T-cell (primary cell): ENCODE measurements at regions of chrX and their contacts with region 1.

Region 1: GRCh38 chrX:12974796-12975669 is at the start of gene TMSB4X:
- DNase-seq: peak; percentile 60 to 85 (median 78)
- ATAC-seq: peak; percentile 52 to 59 (median 55)
- H3K4me3 ChIP-seq: peak within 1 kb of the TSS; percentile 90 to 98
- H3K4me3 Mint-ChIP-seq: peak within 1 kb of the TSS; percentile 79 to 97 (median 94)
- H3K27ac ChIP-seq: peak within 1 kb of the TSS; percentile 94
- H3K27ac Mint-ChIP-seq: peak within 1 kb of the TSS; percentile 93 to 98
- H3K4me1 ChIP-seq: peaks cover 26% of the 10 kb centered on the region in 2 experiments
- H3K4me1 Mint-ChIP-seq: peaks cover 34 to 76% (median 43%) of the 10 kb centered on the region in 3 donors
- H3K27me3 ChIP-seq: no peaks in the 10 kb centered on the region
- H3K27me3 Mint-ChIP-seq: peaks cover 0 to 4% of the 10 kb centered on the region in 2 donors
- total RNA-seq, gene TMSB4X: 5,030 to 6,201 (median 5,880) TPM

Region 2: DNA sequence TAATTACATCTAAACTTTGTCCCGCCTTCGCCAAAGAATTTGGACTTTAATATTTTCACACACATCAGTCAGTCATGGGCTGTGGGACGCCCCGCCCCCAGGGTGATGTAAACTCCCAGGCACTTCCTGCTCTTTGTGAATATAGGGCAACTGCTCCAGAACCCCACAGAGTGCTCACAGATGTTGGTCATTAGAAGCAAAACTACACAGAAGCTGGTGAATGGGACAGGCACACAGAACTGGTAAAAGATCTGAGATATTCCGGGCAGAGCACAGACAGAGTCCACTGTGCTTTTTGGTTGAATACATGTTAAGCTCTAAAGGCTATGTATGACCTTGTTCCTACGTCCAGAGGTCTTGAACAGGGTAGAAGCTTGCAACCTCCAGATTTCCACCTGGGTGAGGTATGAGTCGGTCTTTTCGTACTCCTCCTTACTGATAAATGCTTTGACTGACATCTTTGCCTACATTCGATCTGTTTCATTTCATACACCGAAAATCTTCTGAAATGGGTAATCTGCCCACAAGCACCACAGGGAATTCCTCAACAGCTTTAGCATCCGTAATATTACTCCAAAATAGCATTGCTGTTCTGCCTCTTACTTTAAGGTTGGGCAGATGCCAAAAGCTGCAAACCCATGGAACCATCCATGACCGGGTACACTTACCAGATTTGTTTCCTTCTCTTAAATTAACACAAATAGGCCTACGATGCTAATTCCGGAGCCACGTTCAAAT is 1537.2 kb before region 1 on chrX:
- CTCF ChIA-PET with region 1: no interaction called
- POLR2A ChIA-PET with region 1: no interaction called
- DNase-seq: no peak
- ATAC-seq: no peak
- H3K4me3 ChIP-seq: no peak overlapping the region
- H3K4me3 Mint-ChIP-seq: no peak overlapping the region
- H3K27ac ChIP-seq: no peak overlapping the region
- H3K27ac Mint-ChIP-seq: no peak overlapping the region
- H3K4me1 ChIP-seq: no peaks in the 10 kb centered on the region
- H3K4me1 Mint-ChIP-seq: no peaks in the 10 kb centered on the region
- H3K27me3 ChIP-seq: no peaks in the 10 kb centered on the region
- H3K27me3 Mint-ChIP-seq: peaks cover 2 to 36% of the 10 kb centered on the region in 2 donors

Region 3: GRCh38 chrX:12955882-12956703 is 18.9 kb before region 1 on chrX:
- CTCF ChIA-PET with region 1: interaction called, 9 to 42 read pairs
- POLR2A ChIA-PET with region 1: interaction called, 10 to 13 read pairs
- DNase-seq: peak in 14 of 35 experiments; percentile 13 to 73 (median 51)
- ATAC-seq: peak; percentile 20 to 36 (median 30)
- H3K4me3 ChIP-seq: peak overlapping the region; percentile 43 to 56
- H3K4me3 Mint-ChIP-seq: peak overlapping the region; percentile 78 to 82 (median 78)
- H3K27ac ChIP-seq: peak overlapping the region; percentile 94
- H3K27ac Mint-ChIP-seq: peak overlapping the region; percentile 96 to 99
- H3K4me1 ChIP-seq: peaks cover 66 to 83% of the 10 kb centered on the region in 2 experiments
- H3K4me1 Mint-ChIP-seq: peaks cover 80 to 90% (median 84%) of the 10 kb centered on the region in 3 donors
- H3K27me3 ChIP-seq: no peaks in the 10 kb centered on the region
- H3K27me3 Mint-ChIP-seq: no peaks in the 10 kb centered on the region

Region 4: DNA sequence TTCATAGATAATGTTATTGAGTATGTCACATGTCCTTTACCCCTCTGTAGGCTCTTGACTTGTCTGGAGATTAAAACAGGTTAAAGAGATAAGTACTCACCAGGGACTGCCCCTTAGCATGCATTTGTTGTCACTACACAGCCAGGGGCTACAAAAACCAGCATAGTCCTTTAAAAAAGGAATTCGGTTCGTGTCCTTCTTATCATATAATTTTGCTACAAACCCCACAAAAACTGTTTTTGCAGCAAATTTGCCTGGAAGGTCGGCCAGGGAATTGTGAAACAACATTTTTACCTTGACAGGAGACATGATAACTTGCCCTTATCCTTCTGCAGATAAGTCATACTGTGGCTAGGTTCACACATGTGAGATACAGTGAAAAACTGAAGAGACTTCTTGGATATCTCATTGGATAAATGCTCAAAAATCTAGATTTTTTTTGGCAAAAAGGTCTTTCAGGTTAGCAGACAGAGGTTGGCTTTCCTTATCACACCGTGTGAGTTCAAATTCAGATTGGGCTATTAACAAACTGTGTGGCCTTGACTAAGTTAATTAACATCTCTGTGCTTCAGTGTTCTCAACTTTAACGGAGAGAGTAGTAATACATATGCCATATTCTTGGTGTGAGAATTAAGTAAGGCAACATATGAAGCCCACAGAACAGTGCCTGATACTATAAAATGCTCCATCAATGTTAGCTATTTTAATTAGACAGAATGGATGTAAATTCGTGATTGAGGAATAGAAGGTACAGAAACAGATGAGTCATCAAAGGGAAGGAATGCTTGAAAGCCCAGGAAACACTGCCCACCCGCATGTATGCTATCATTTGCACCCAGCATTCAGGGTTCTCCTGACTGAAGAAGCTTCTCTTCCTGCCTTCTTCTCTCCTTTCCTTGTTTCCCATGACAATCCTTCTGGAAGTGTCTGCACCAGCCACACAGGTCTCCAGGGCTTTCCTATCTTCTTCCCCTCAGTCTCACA is 39.4 kb after region 1 on chrX:
- CTCF ChIA-PET with region 1: no interaction called
- POLR2A ChIA-PET with region 1: interaction called in 1 of 2 experiments, 11 read pairs
- DNase-seq: no peak
- ATAC-seq: peak in 1 of 4 experiments; percentile 32
- H3K4me3 ChIP-seq: no peak overlapping the region
- H3K4me3 Mint-ChIP-seq: peak overlapping the region in 2 of 3 donors; percentile 2 to 66
- H3K27ac ChIP-seq: peak overlapping the region; percentile 95
- H3K27ac Mint-ChIP-seq: peak overlapping the region; percentile 85 to 96
- H3K4me1 ChIP-seq: peaks cover 20 to 33% of the 10 kb centered on the region in 2 experiments
- H3K4me1 Mint-ChIP-seq: peaks cover 58 to 68% (median 58%) of the 10 kb centered on the region in 3 donors
- H3K27me3 ChIP-seq: no peaks in the 10 kb centered on the region
- H3K27me3 Mint-ChIP-seq: peaks cover 0 to 40% of the 10 kb centered on the region in 2 donors

Region 5: GRCh38 chrX:13033193-13033592 is 58.2 kb after region 1 on chrX:
- CTCF ChIA-PET with region 1: no interaction called
- POLR2A ChIA-PET with region 1: no interaction called
- DNase-seq: no peak
- ATAC-seq: no peak
- H3K4me3 ChIP-seq: no peak overlapping the region
- H3K4me3 Mint-ChIP-seq: no peak overlapping the region
- H3K27ac ChIP-seq: no peak overlapping the region
- H3K27ac Mint-ChIP-seq: no peak overlapping the region
- H3K4me1 ChIP-seq: peaks cover 23 to 24% of the 10 kb centered on the region in 2 experiments
- H3K4me1 Mint-ChIP-seq: peaks cover 44 to 53% (median 44%) of the 10 kb centered on the region in 3 donors
- H3K27me3 ChIP-seq: no peaks in the 10 kb centered on the region
- H3K27me3 Mint-ChIP-seq: peaks cover 0 to 37% of the 10 kb centered on the region in 2 donors

Region 6: GRCh38 chrX:13078739-13079444 is 103.9 kb after region 1 on chrX:
- CTCF ChIA-PET with region 1: interaction called in 1 of 2 experiments, 3 read pairs
- POLR2A ChIA-PET with region 1: interaction called, 3 to 10 read pairs
- DNase-seq: peak in 1 of 35 experiments; percentile 43
- ATAC-seq: no peak
- H3K4me3 ChIP-seq: peak overlapping the region in 1 of 2 donors; percentile 10
- H3K4me3 Mint-ChIP-seq: peak overlapping the region; percentile 51 to 77 (median 54)
- H3K27ac ChIP-seq: peak overlapping the region; percentile 85
- H3K27ac Mint-ChIP-seq: peak overlapping the region; percentile 97 to 99
- H3K4me1 ChIP-seq: peaks cover 33 to 64% of the 10 kb centered on the region in 2 experiments
- H3K4me1 Mint-ChIP-seq: peaks cover 90 to 91% (median 91%) of the 10 kb centered on the region in 3 donors
- H3K27me3 ChIP-seq: no peaks in the 10 kb centered on the region
- H3K27me3 Mint-ChIP-seq: peaks cover 0 to 25% of the 10 kb centered on the region in 2 donors

Region 7: DNA sequence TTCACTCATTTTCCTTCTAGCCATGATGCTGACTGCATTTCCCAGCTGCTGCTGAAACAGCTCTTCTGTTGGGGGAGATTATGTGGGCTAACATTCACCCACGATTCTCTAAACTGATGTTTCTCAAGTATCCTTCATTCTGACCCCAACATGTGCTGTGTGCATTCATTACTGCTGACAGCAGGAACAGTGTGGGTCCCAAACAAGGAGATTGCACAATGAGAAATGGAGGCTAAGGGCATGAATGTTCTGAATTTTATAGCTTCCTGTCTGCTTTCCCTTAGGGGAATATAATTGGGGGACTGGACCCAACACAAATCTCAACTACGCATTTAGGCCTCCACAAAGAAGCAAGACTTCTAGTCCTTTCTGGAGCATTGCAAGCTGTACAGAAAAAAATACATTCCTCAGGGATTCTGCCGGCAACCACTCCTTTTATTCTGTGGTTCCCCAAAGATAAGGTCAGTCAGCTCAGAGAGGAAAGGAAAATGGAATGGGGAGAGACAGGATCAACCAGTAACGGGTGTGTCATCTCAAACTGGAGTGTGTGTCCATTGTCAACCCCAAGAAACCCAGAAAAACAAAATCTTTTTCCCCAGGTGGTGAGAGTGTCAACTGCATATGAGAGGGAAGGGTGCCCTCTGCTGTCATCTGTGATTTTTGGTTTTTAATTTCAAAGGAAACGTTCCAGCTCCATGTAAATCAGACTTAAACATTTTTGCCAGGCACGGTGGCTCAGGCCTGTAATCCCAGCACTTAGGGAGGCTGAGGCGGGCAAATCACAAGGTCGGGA is 512.9 kb after region 1 on chrX:
- CTCF ChIA-PET with region 1: interaction called, 4 to 12 read pairs
- POLR2A ChIA-PET with region 1: no interaction called
- DNase-seq: peak in 30 of 35 experiments; percentile 3 to 75 (median 28)
- ATAC-seq: peak; percentile 58 to 84 (median 66)
- H3K4me3 ChIP-seq: no peak overlapping the region
- H3K4me3 Mint-ChIP-seq: no peak overlapping the region
- H3K27ac ChIP-seq: peak overlapping the region; percentile 57
- H3K27ac Mint-ChIP-seq: peak overlapping the region; percentile 77 to 84
- H3K4me1 ChIP-seq: peaks cover 5 to 25% of the 10 kb centered on the region in 2 experiments
- H3K4me1 Mint-ChIP-seq: peaks cover 19 to 46% (median 28%) of the 10 kb centered on the region in 3 donors
- H3K27me3 ChIP-seq: no peaks in the 10 kb centered on the region
- H3K27me3 Mint-ChIP-seq: peaks cover 0 to 29% of the 10 kb centered on the region in 2 donors